Cardiac septum (tissue), 1 donor: ENCODE measurements at regions of chrX and their contacts with region 1.

Region 1: DNA sequence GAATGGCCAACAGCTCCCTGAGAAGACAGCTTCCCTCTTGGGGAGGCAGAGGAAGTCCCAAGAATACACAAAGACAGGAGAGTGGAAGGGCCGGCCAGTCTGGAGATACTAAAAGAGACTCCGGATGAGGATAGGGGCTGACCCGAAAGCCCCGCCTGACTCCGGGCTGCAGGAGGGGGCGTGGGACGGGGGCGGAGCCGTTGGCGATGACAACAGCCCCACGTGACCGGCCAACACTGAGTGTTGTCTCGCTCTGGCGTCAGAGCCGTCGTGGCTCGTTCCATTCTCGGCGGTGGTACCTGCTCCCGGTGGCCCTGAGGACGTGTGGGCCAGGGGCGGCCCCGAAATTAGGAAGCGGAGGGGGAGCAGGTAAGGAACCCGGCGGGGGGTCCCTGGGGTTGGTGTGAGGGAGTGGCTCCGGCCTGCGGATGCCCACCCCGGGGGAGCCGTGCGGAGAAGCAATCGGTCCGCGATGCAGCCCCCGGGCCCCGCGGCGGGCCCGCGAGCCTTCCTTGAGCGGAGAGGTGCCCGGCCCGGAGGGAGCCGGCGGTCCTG is at the start of gene BEX4:
- DNase-seq: peak; percentile 91
- total RNA-seq, gene BEX4: 34.3 TPM

Region 2: GRCh38 chrX:103253608-103254007 is 38.7 kb after region 1 on chrX:
- intact Hi-C with region 1: loop called (anchors 1 kb)
- DNase-seq: no peak

Region 3: GRCh38 chrX:103343105-103343504 is 128.2 kb after region 1 on chrX:
- intact Hi-C with region 1: loop called (anchors 5 kb)
- DNase-seq: no peak